Calu3 (cell line): ENCODE measurements at regions of chr4 and their contacts with region 1.

Region 1: DNA sequence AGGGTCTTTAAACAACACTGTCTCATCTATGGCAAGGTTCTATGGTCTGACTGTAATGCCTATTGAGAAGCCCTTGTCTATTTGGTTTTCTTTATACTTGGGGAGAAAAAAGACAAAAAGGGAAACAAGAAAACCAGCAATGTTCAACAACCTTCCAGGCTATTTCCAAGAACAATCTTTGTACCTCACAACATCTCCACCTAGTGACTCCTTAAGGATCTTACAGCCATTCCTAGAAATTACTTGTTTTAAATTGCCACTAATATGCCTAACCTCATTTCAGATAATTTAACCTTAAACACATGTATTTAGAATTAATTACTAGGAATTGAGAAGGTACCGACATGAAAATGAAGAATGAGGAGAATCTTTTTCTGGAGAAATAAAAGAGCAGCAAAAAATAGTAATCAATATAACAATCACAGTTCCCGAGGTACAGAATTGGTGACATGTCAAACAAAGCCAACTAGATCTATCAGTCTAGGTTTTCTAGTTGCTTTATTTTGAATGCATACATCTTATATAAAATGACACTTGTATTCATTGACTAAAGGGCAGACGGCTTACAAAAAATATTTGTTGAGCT is 1.6 kb upstream of the RBM46 start:
- DNase-seq: no peak
- H3K4me3 Mint-ChIP-seq: no peak overlapping the region
- H3K27ac Mint-ChIP-seq: no peak overlapping the region
- H3K4me1 Mint-ChIP-seq: no peaks in the 10 kb centered on the region
- H3K27me3 Mint-ChIP-seq: no peaks in the 10 kb centered on the region
- CTCF ChIP-seq: peak; percentile 25

Region 2: DNA sequence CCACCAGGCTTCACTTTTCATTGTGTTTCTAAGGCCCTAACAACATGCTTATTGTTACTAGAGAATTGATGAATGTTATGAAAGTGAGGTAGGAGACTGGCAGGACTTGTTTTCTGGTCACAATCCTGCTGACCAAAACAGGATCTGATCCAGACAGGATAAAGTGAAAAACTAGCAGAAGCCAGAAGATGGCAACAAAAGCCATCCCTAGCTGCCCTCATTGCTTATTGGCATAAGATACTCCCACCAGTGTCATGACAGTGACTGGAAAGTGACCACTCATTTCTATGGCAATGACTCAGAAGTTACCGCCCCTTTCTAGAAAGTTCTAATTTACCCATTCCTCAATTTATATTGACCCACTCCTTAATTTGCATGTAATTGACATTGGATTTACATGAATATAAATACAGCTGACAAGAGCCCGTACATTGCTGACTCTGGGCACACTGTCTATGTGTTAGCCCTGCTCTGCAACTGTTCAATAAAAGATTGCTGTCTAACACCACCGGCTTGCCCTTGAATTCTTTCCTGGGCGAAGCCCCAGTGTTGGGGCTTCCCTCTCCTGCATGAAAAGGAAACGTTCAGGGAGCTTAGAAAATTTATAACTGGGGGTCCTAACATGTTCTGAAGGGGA is 137.0 kb before region 1 on chr4:
- CTCF ChIA-PET with region 1: no interaction called
- intact Hi-C with region 1: loop called (anchors 2 kb)
- DNase-seq: no peak
- H3K4me3 Mint-ChIP-seq: no peak overlapping the region
- H3K27ac Mint-ChIP-seq: no peak overlapping the region
- H3K4me1 Mint-ChIP-seq: peaks cover 24% of the 10 kb centered on the region
- H3K27me3 Mint-ChIP-seq: no peaks in the 10 kb centered on the region
- CTCF ChIP-seq: no peak

Region 3: DNA sequence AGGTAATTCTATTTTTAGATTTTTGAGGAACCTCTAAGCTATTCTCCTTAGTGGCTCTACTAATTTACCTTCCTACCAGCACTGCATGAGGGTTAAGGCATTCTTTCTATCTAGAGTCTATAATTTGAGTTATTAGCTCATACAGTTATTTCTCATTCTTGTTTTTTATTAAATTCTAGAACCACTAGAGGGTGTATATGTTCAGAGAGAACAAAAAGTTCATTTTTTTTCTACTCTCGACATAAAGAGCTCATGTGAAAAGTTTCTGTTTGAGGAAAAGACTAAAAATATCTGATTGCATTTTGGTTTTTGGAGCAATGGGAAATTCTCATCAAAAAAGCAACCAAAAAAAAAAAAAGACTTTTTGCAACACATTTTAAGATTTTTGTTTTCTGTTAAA is 92.6 kb before region 1 on chr4:
- CTCF ChIA-PET with region 1: interaction called, 9 read pairs
- intact Hi-C with region 1: loop called (anchors 1 kb)
- DNase-seq: no peak
- H3K4me3 Mint-ChIP-seq: no peak overlapping the region
- H3K27ac Mint-ChIP-seq: no peak overlapping the region
- H3K4me1 Mint-ChIP-seq: no peaks in the 10 kb centered on the region
- H3K27me3 Mint-ChIP-seq: no peaks in the 10 kb centered on the region
- CTCF ChIP-seq: no peak